Mammary epithelial cell (primary cell): ENCODE measurements at regions of chr5 and their contacts with region 1.

Region 1: GRCh38 chr5:154405078-154405792 is 40.6 kb upstream of the SAP30L start:
- DNase-seq: peak; percentile 50
- H3K4me3 ChIP-seq: peak overlapping the region; percentile 15 to 35 (median 22)
- H3K27ac ChIP-seq: no peak overlapping the region
- H3K4me1 ChIP-seq: peaks cover 20% of the 10 kb centered on the region
- H3K27me3 ChIP-seq: no peaks in the 10 kb centered on the region
- CTCF ChIP-seq: peak; percentile 63 to 89

Region 2: GRCh38 chr5:153974131-153974812 is 431.0 kb before region 1 on chr5:
- CTCF ChIA-PET with region 1: interaction called, 4 read pairs
- dilution Hi-C with region 1: no loop called
- in situ Hi-C with region 1: no loop called
- intact Hi-C with region 1: loop called (anchors 2 kb)
- DNase-seq: peak; percentile 25
- H3K4me3 ChIP-seq: no peak overlapping the region
- H3K27ac ChIP-seq: no peak overlapping the region
- H3K4me1 ChIP-seq: no peaks in the 10 kb centered on the region
- H3K27me3 ChIP-seq: no peaks in the 10 kb centered on the region
- CTCF ChIP-seq: peak; percentile 72 to 75

Region 3: GRCh38 chr5:154072414-154073171 is 332.6 kb before region 1 on chr5:
- CTCF ChIA-PET with region 1: interaction called, 3 read pairs
- dilution Hi-C with region 1: no loop called
- in situ Hi-C with region 1: loop called (anchors 5 to 10 kb)
- intact Hi-C with region 1: loop called (anchors 1 kb)
- DNase-seq: peak; percentile 56
- H3K4me3 ChIP-seq: no peak overlapping the region
- H3K27ac ChIP-seq: no peak overlapping the region
- H3K4me1 ChIP-seq: peaks cover 3% of the 10 kb centered on the region
- H3K27me3 ChIP-seq: no peaks in the 10 kb centered on the region
- CTCF ChIP-seq: peak; percentile 82 to 90

Region 4: GRCh38 chr5:154189819-154190594 is 215.2 kb before region 1 on chr5:
- CTCF ChIA-PET with region 1: interaction called, 5 read pairs
- dilution Hi-C with region 1: no loop called
- in situ Hi-C with region 1: loop called (anchors 10 kb)
- intact Hi-C with region 1: loop called (anchors 1 kb)
- DNase-seq: peak; percentile 78
- H3K4me3 ChIP-seq: peak overlapping the region; percentile 61 to 76 (median 64)
- H3K27ac ChIP-seq: peak overlapping the region; percentile 16
- H3K4me1 ChIP-seq: peaks cover 15% of the 10 kb centered on the region
- H3K27me3 ChIP-seq: peaks cover 6% of the 10 kb centered on the region
- CTCF ChIP-seq: peak; percentile 16 to 56

Region 5: DNA sequence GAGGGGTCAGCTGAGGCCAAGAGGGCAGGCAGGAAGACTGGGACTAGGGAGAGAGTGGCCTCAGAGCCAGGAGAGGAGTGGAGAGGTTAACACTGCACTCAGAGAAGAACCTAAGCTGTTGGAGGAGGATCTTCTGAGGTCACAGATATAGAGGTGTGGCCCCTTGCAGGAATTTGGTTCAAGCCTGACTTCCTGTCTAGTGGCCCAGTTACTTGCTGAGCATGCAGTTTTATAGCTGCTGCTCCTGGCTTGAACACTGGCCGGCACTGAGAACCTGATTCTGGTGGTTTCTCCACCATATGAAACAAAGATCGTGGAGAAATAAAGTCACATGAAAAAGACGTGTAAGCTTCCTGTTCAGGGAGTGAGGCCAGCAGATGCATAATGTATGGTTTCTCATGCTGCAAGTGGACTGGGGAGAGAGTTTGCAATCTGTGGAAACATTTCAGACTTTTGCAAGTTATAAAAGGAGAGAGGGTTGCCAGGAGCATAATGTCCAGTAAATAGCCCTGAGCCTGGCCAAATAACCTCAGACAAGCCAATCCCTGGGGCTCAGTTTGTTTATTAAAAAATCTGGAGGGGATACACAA is 132.1 kb before region 1 on chr5:
- CTCF ChIA-PET with region 1: no interaction called
- dilution Hi-C with region 1: no loop called
- in situ Hi-C with region 1: no loop called
- intact Hi-C with region 1: no loop called
- DNase-seq: no peak
- H3K4me3 ChIP-seq: no peak overlapping the region
- H3K27ac ChIP-seq: no peak overlapping the region
- H3K4me1 ChIP-seq: peaks cover 5% of the 10 kb centered on the region
- H3K27me3 ChIP-seq: no peaks in the 10 kb centered on the region
- CTCF ChIP-seq: no peak

Region 6: GRCh38 chr5:154368041-154368800 is 37.0 kb before region 1 on chr5:
- CTCF ChIA-PET with region 1: no interaction called
- dilution Hi-C with region 1: no loop called
- in situ Hi-C with region 1: no loop called
- intact Hi-C with region 1: loop called (anchors 2 kb)
- DNase-seq: peak; percentile 95
- H3K4me3 ChIP-seq: peak overlapping the region in 2 of 3 experiments; percentile 4 to 7
- H3K27ac ChIP-seq: peak overlapping the region; percentile 84
- H3K4me1 ChIP-seq: peaks cover 78% of the 10 kb centered on the region
- H3K27me3 ChIP-seq: no peaks in the 10 kb centered on the region
- CTCF ChIP-seq: no peak

Region 7: GRCh38 chr5:154505611-154506010 is 100.4 kb after region 1 on chr5:
- CTCF ChIA-PET with region 1: no interaction called
- dilution Hi-C with region 1: no loop called
- in situ Hi-C with region 1: no loop called
- intact Hi-C with region 1: no loop called
- DNase-seq: no peak
- H3K4me3 ChIP-seq: no peak overlapping the region
- H3K27ac ChIP-seq: no peak overlapping the region
- H3K4me1 ChIP-seq: no peaks in the 10 kb centered on the region
- H3K27me3 ChIP-seq: peaks cover 4% of the 10 kb centered on the region
- CTCF ChIP-seq: no peak